Naive thymus-derived CD4-positive, alpha-beta T cell (primary cell): ENCODE measurements at regions of chr12 and their contacts with region 1.

Region 1: GRCh38 chr12:47963340-47964040 is at the start of gene TMEM106C:
- DNase-seq: peak; percentile 88 to 94 (median 92)
- ATAC-seq: peak; percentile 99
- H3K4me3 ChIP-seq: peak within 1 kb of the TSS; percentile 90
- H3K4me3 Mint-ChIP-seq: peak within 1 kb of the TSS; percentile 92 to 100 (median 96)
- H3K27ac ChIP-seq: peak within 1 kb of the TSS; percentile 75
- H3K27ac Mint-ChIP-seq: peak within 1 kb of the TSS; percentile 86 to 94 (median 90)
- H3K4me1 ChIP-seq: peaks cover 7 to 13% of the 10 kb centered on the region in 2 donors
- H3K4me1 Mint-ChIP-seq: peaks cover 20 to 42% (median 34%) of the 10 kb centered on the region in 7 donors
- H3K27me3 ChIP-seq: no peaks in the 10 kb centered on the region
- H3K27me3 Mint-ChIP-seq: peaks cover 0 to 36% (median 6%) of the 10 kb centered on the region in 5 donors
- total RNA-seq, gene TMEM106C: 20.7 to 120 (median 34.4) TPM

Region 2: GRCh38 chr12:47705566-47706425 is 257.7 kb before region 1 on chr12 and contains the start of gene RPAP3:
- CTCF ChIA-PET with region 1: no interaction called
- POLR2A ChIA-PET with region 1: no interaction called
- intact Hi-C with region 1: loop called in 1 of 2 experiments (anchors 5 kb)
- DNase-seq: peak; percentile 91 to 99 (median 95)
- ATAC-seq: peak; percentile 97
- H3K4me3 ChIP-seq: peak within 1 kb of the TSS; percentile 59
- H3K4me3 Mint-ChIP-seq: peak within 1 kb of the TSS; percentile 92 to 99 (median 98)
- H3K27ac ChIP-seq: peak within 1 kb of the TSS; percentile 85
- H3K27ac Mint-ChIP-seq: peak within 1 kb of the TSS; percentile 93 to 99 (median 97)
- H3K4me1 ChIP-seq: peaks cover 21 to 27% of the 10 kb centered on the region in 2 donors
- H3K4me1 Mint-ChIP-seq: peaks cover 48 to 73% (median 63%) of the 10 kb centered on the region in 7 donors
- H3K27me3 ChIP-seq: no peaks in the 10 kb centered on the region
- H3K27me3 Mint-ChIP-seq: no peaks in the 10 kb centered on the region
- total RNA-seq, gene RPAP3: 28.5 to 51.3 (median 43.9) TPM

Region 3: GRCh38 chr12:47904713-47905310 is 58.7 kb before region 1 on chr12 and contains the start of gene VDR:
- CTCF ChIA-PET with region 1: no interaction called
- POLR2A ChIA-PET with region 1: no interaction called
- intact Hi-C with region 1: loop called (anchors 1 kb)
- DNase-seq: peak; percentile 42 to 76 (median 64)
- ATAC-seq: peak; percentile 86
- H3K4me3 ChIP-seq: peak within 1 kb of the TSS; percentile 73
- H3K4me3 Mint-ChIP-seq: peak within 1 kb of the TSS; percentile 86 to 98 (median 94)
- H3K27ac ChIP-seq: peak within 1 kb of the TSS; percentile 44
- H3K27ac Mint-ChIP-seq: peak within 1 kb of the TSS; percentile 51 to 88 (median 74)
- H3K4me1 ChIP-seq: peaks cover 25 to 41% of the 10 kb centered on the region in 2 donors
- H3K4me1 Mint-ChIP-seq: peaks cover 35 to 57% (median 47%) of the 10 kb centered on the region in 7 donors
- H3K27me3 ChIP-seq: no peaks in the 10 kb centered on the region
- H3K27me3 Mint-ChIP-seq: peaks cover 0 to 34% (median 0%) of the 10 kb centered on the region in 5 donors
- total RNA-seq, gene VDR: 1.6 to 82.6 (median 2.9) TPM

Region 4: GRCh38 chr12:48017496-48017895 is 54.0 kb after region 1 on chr12:
- CTCF ChIA-PET with region 1: no interaction called
- POLR2A ChIA-PET with region 1: no interaction called
- intact Hi-C with region 1: no loop called
- DNase-seq: no peak
- ATAC-seq: no peak
- H3K4me3 ChIP-seq: no peak overlapping the region
- H3K4me3 Mint-ChIP-seq: no peak overlapping the region
- H3K27ac ChIP-seq: no peak overlapping the region
- H3K27ac Mint-ChIP-seq: no peak overlapping the region
- H3K4me1 ChIP-seq: no peaks in the 10 kb centered on the region
- H3K4me1 Mint-ChIP-seq: no peaks in the 10 kb centered on the region
- H3K27me3 ChIP-seq: no peaks in the 10 kb centered on the region
- H3K27me3 Mint-ChIP-seq: peaks cover 19 to 74% (median 31%) of the 10 kb centered on the region in 5 donors

Region 5: GRCh38 chr12:48105862-48106680 is 142.6 kb after region 1 on chr12 and contains the start of gene SENP1:
- CTCF ChIA-PET with region 1: no interaction called
- POLR2A ChIA-PET with region 1: interaction called, 3 read pairs
- intact Hi-C with region 1: loop called (anchors 2 to 5 kb)
- DNase-seq: peak; percentile 81 to 93 (median 90)
- ATAC-seq: peak; percentile 88
- H3K4me3 ChIP-seq: peak within 1 kb of the TSS; percentile 89
- H3K4me3 Mint-ChIP-seq: peak within 1 kb of the TSS; percentile 88 to 96 (median 92)
- H3K27ac ChIP-seq: peak within 1 kb of the TSS; percentile 93
- H3K27ac Mint-ChIP-seq: peak within 1 kb of the TSS; percentile 90 to 100 (median 95)
- H3K4me1 ChIP-seq: peaks cover 17 to 25% of the 10 kb centered on the region in 2 donors
- H3K4me1 Mint-ChIP-seq: peaks cover 33 to 65% (median 58%) of the 10 kb centered on the region in 7 donors
- H3K27me3 ChIP-seq: no peaks in the 10 kb centered on the region
- H3K27me3 Mint-ChIP-seq: peaks cover 0 to 8% (median 0%) of the 10 kb centered on the region in 5 donors
- total RNA-seq, gene SENP1: 16.9 to 41.9 (median 31.5) TPM

Region 6: DNA sequence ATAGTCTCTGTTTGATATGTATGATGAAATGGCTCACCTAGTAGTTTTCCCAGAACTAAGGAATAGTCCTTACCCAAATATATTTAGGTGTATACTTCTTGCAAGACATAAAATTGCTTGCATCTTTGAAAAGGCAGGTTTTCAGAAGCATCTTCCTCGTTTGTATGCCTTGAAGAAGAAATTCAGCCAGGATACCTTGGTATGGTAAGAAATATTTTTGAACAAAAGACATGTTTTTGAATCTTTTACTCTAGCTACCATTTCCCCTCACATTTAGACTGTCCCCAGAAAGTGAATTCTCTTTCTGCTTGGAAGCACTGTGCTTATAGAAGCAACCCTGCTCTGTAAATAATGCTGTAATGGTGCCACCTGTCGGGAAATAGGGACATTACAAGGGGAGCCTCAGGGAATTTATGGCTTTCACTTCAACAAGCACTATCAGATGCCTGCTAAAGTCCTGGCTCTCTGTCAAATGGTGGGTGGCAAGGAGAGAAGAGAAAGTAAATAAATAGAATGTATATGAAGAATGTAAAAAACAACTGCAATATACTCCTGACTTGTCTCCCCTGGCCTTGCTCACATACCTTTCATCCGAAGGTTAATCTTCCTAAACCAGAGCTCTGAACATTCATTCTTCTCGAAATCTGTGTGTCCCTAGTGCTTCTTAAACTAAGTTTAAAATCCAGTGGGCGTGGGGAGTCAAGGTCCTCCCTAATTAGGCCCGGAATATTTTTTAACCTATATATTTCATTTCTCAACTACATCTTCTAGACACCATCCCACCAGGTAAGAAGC is 226.0 kb after region 1 on chr12:
- CTCF ChIA-PET with region 1: no interaction called
- POLR2A ChIA-PET with region 1: no interaction called
- intact Hi-C with region 1: loop called in 1 of 2 experiments (anchors 1 kb)
- DNase-seq: peak; percentile 29 to 72 (median 62)
- ATAC-seq: peak; percentile 91
- H3K4me3 ChIP-seq: no peak overlapping the region
- H3K4me3 Mint-ChIP-seq: no peak overlapping the region
- H3K27ac ChIP-seq: no peak overlapping the region
- H3K27ac Mint-ChIP-seq: no peak overlapping the region
- H3K4me1 ChIP-seq: peaks cover 0 to under 1% of the 10 kb centered on the region in 2 donors
- H3K4me1 Mint-ChIP-seq: peaks cover 0 to 12% (median 0%) of the 10 kb centered on the region in 7 donors
- H3K27me3 ChIP-seq: no peaks in the 10 kb centered on the region
- H3K27me3 Mint-ChIP-seq: peaks cover 16 to 76% (median 22%) of the 10 kb centered on the region in 5 donors

Region 7: GRCh38 chr12:48336562-48336961 is 373.1 kb after region 1 on chr12:
- CTCF ChIA-PET with region 1: no interaction called
- POLR2A ChIA-PET with region 1: no interaction called
- intact Hi-C with region 1: no loop called
- DNase-seq: no peak
- ATAC-seq: no peak
- H3K4me3 ChIP-seq: no peak overlapping the region
- H3K4me3 Mint-ChIP-seq: no peak overlapping the region
- H3K27ac ChIP-seq: no peak overlapping the region
- H3K27ac Mint-ChIP-seq: peak overlapping the region in 4 of 9 donors; percentile 17 to 70 (median 60)
- H3K4me1 ChIP-seq: no peaks in the 10 kb centered on the region
- H3K4me1 Mint-ChIP-seq: peaks cover 2 to 23% (median 18%) of the 10 kb centered on the region in 7 donors
- H3K27me3 ChIP-seq: no peaks in the 10 kb centered on the region
- H3K27me3 Mint-ChIP-seq: no peaks in the 10 kb centered on the region

Region 8: GRCh38 chr12:48454667-48455066 is 491.2 kb after region 1 on chr12:
- CTCF ChIA-PET with region 1: no interaction called
- POLR2A ChIA-PET with region 1: no interaction called
- intact Hi-C with region 1: loop called in 1 of 2 experiments (anchors 1 kb)
- DNase-seq: peak in 7 of 9 donors; percentile 13 to 57 (median 32)
- ATAC-seq: peak; percentile 73
- H3K4me3 ChIP-seq: no peak overlapping the region
- H3K4me3 Mint-ChIP-seq: no peak overlapping the region
- H3K27ac ChIP-seq: no peak overlapping the region
- H3K27ac Mint-ChIP-seq: no peak overlapping the region
- H3K4me1 ChIP-seq: no peaks in the 10 kb centered on the region
- H3K4me1 Mint-ChIP-seq: no peaks in the 10 kb centered on the region
- H3K27me3 ChIP-seq: no peaks in the 10 kb centered on the region
- H3K27me3 Mint-ChIP-seq: peaks cover 0 to 18% (median 8%) of the 10 kb centered on the region in 5 donors